Aorta (tissue), 5 donors: ENCODE measurements at regions of chr1 and their contacts with region 1.

Region 1: DNA sequence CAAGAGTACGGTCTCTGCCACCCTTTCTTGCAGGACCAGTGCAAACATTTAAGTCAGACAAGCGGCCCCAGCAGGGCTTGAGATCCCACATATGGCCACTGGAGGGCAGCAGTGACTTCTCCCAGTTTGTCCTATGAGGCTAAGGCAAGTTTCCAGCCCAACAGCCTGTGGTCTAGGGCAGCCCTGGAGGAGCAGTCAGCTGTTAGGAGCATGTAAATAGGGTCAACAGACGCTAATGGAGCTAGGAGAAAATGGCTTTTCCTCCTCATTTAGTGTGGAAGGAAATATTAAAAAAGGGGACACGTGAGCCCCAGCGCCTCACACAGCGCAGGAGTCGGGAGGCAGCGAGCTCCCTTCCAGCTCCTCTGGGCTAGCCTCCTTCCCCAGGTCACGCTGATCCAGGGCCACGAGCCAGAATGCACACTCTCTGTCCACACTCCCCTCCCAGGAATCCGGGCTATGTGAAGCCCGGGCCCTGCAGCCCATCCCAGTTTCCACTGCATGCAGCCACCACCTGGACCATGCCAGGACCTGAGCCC is 95.6 kb downstream of the LAMC2 start:
- DNase-seq: peak; percentile 92 to 95
- ATAC-seq: peak; percentile 95
- H3K4me3 ChIP-seq: no peak overlapping the region
- H3K27ac ChIP-seq: peak overlapping the region in 1 of 2 donors; percentile 11
- H3K4me1 ChIP-seq: peaks cover 0 to 2% of the 10 kb centered on the region in 2 donors
- H3K27me3 ChIP-seq: no peaks in the 10 kb centered on the region

Region 2: DNA sequence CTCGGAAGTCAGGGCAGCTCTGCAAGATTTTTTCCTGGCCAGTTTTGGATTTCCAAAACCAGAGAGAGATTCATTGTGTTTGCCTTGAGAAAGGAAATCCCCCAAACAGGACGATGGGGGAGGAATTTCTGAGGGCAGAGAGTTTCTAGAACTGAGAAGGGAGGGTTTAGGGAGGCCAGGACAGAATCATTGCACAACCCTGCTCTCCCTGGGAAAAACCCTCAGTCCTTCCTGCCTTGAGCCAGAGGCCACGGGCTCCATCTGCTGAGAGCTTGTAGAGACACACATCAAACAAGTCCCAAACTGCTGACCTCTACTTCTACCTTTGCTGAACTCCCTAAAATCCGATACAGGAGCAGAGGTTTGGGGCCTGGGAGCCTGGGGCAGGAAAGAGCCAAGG is 36.8 kb after region 1 on chr1:
- intact Hi-C with region 1: loop called (anchors 1 kb)
- DNase-seq: peak; percentile 85 to 89
- ATAC-seq: peak; percentile 94
- H3K4me3 ChIP-seq: no peak overlapping the region
- H3K27ac ChIP-seq: peak overlapping the region; percentile 11 to 53
- H3K4me1 ChIP-seq: no peaks in the 10 kb centered on the region
- H3K27me3 ChIP-seq: no peaks in the 10 kb centered on the region

Region 3: DNA sequence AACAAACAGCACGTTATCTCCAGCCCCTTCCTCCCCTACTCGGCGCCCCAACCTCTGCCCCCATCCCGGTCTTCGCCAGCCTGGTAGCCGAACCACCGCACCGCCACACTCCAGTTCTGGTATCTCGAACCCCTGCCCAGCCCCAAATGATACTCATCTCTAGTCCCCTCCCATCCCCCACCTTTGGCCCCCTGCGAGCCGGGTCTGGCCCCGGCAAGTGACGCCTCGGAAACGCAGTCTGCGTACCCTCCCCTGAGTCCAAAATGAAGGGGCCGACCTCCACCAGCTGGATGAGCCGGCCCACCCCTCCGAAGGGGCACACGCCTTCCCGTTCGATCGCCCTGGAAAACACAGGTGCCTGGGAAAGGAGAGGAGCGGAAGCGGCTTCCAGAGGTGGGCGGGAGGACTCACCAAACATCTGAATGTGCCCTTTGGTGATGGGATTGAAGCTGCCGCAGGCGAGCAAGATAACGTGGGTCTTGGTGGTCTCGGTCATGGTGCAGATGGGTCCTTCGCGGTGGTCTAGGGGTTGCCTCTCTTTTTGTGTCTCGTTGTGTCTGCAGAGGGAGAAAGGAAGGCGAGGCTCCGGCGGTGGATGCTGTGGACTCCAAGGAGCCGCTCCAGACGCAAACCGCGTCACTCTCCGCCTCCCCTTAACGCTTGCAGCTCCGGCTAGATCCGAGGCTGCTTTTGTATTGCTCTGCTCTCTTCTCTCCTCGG is 136.3 kb after region 1 on chr1 and contains the start of gene NMNAT2:
- intact Hi-C with region 1: no loop called
- DNase-seq: peak in 1 of 2 donors; percentile 46
- ATAC-seq: peak; percentile 24
- H3K4me3 ChIP-seq: peak within 1 kb of the TSS in 1 of 2 donors; percentile 2
- H3K27ac ChIP-seq: no peak within 1 kb of the TSS
- H3K4me1 ChIP-seq: no peaks in the 10 kb centered on the region
- H3K27me3 ChIP-seq: no peaks in the 10 kb centered on the region
- total RNA-seq, gene NMNAT2: 1.3 to 2.8 TPM

Region 4: DNA sequence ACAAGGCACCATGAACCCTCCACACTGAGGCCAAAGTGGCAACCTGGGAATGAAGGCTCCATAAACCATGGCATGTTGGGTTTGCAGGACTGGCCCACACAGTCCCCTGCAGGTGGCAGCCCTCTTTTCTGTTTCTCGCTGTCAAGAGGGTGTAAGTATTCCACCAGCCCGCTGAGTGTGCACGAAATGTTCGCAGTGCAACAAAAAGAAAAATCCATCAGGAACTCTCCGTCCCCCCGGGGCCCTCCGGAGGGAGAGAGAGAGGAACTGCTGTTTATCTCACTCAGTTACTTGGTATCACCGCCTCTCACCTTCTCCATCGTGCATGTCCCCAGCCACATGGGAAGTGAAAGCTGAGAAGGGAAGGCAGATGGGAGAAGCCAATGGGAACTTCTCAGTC is 270.3 kb after region 1 on chr1:
- intact Hi-C with region 1: loop called in 1 of 2 experiments (anchors 10 kb)
- DNase-seq: no peak
- ATAC-seq: no peak
- H3K4me3 ChIP-seq: no peak overlapping the region
- H3K27ac ChIP-seq: no peak overlapping the region
- H3K4me1 ChIP-seq: no peaks in the 10 kb centered on the region
- H3K27me3 ChIP-seq: no peaks in the 10 kb centered on the region